Heart left ventricle (tissue), 16 donors: ENCODE measurements at regions of chr4 and their contacts with region 1.

Region 1: GRCh38 chr4:71229477-71230270 is 109.1 kb upstream of the SLC4A4 start:
- DNase-seq: peak in 3 of 5 donors; percentile 30 to 41 (median 31)
- ATAC-seq: peak in 2 of 4 donors; percentile 61 to 71
- H3K4me3 ChIP-seq: peak overlapping the region in 5 of 12 donors; percentile 0 to 18 (median 8)
- H3K27ac ChIP-seq: peak overlapping the region in 10 of 12 donors; percentile 38 to 85 (median 74)
- H3K4me1 ChIP-seq: peaks cover 0 to 40% (median 13%) of the 10 kb centered on the region in 12 donors
- H3K27me3 ChIP-seq: no peaks in the 10 kb centered on the region
- CTCF ChIP-seq: peak; percentile 44 to 80 (median 68)
- POLR2A ChIP-seq: no peak

Region 2: DNA sequence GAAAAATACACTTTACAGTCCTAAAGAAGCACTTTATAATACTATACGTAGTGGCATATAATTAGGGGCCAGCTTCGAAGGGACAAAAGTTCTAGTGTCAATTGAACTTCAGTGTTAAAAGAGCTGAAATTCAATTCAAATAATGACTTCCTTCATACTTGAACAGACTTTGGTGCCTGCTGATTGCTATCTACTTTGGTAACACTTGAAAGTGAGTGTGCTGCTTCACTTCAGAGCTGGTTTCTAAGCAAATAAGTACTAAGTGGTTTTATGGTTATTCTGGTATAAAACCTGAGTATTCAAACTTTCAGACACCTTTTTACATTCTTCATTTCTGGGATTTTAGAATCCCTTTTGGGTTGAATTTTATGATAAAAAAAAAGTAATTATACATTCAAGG is 216.1 kb after region 1 on chr4:
- intact Hi-C with region 1: loop called in 1 of 10 experiments (anchors 5 kb)
- DNase-seq: no peak
- ATAC-seq: no peak
- H3K4me3 ChIP-seq: no peak overlapping the region
- H3K27ac ChIP-seq: no peak overlapping the region
- H3K4me1 ChIP-seq: peaks cover 0 to 40% (median 8%) of the 10 kb centered on the region in 12 donors
- H3K27me3 ChIP-seq: no peaks in the 10 kb centered on the region
- CTCF ChIP-seq: no peak
- POLR2A ChIP-seq: no peak

Region 3: DNA sequence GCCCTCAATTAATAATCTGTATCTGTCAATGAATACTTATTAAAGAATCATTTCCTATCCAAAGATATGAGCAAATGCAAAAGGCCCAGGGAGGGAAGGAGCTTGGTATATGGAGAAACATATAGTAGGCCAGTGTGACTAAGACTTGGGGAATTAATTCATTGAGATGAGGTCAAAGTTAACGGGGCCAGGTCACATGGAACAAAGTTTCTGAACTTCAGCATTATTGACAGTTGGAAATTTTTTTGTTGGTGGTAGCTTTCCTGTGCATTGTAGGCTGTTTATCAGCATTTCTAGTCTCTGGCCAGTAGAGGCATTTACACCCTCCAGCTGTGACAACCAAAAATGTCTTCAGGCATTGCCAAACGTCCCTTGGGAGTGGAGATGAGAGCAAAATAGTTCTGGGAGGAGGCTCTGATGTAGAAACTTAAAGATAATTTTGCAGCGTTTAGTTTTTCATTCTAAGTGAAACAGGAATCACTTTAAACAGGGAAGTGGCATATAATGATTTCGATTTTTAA is 311.1 kb after region 1 on chr4:
- intact Hi-C with region 1: loop called in 1 of 10 experiments (anchors 5 kb)
- DNase-seq: no peak
- ATAC-seq: no peak
- H3K4me3 ChIP-seq: no peak overlapping the region
- H3K27ac ChIP-seq: no peak overlapping the region
- H3K4me1 ChIP-seq: peaks cover 0 to 15% (median 0%) of the 10 kb centered on the region in 12 donors
- H3K27me3 ChIP-seq: no peaks in the 10 kb centered on the region
- CTCF ChIP-seq: peak in 1 of 12 donors; percentile 12
- POLR2A ChIP-seq: no peak

Region 4: GRCh38 chr4:71553605-71554004 is 323.9 kb after region 1 on chr4:
- intact Hi-C with region 1: loop called in 6 of 10 experiments (anchors 5 to 10 kb)
- DNase-seq: no peak
- ATAC-seq: peak in 3 of 4 donors; percentile 70 to 81 (median 74)
- H3K4me3 ChIP-seq: no peak overlapping the region
- H3K27ac ChIP-seq: no peak overlapping the region
- H3K4me1 ChIP-seq: peaks cover 0 to 5% (median 0%) of the 10 kb centered on the region in 12 donors
- H3K27me3 ChIP-seq: no peaks in the 10 kb centered on the region
- CTCF ChIP-seq: peak; percentile 25 to 64 (median 51)
- POLR2A ChIP-seq: no peak